ENCODE measurements at regions of chr16 and their contacts with region 1.

Region 1: GRCh38 chr16:67155295-67156142 is 4.2 kb downstream of the TRADD start:
- DNase-seq: peak; percentile 88
- ATAC-seq: peak; percentile 66

Region 2: GRCh38 chr16:66977341-66978113 is 178.0 kb before region 1 on chr16:
- intact Hi-C with region 1: loop called (anchors 2 kb)
- DNase-seq: peak; percentile 95
- ATAC-seq: peak; percentile 98

Region 3: DNA sequence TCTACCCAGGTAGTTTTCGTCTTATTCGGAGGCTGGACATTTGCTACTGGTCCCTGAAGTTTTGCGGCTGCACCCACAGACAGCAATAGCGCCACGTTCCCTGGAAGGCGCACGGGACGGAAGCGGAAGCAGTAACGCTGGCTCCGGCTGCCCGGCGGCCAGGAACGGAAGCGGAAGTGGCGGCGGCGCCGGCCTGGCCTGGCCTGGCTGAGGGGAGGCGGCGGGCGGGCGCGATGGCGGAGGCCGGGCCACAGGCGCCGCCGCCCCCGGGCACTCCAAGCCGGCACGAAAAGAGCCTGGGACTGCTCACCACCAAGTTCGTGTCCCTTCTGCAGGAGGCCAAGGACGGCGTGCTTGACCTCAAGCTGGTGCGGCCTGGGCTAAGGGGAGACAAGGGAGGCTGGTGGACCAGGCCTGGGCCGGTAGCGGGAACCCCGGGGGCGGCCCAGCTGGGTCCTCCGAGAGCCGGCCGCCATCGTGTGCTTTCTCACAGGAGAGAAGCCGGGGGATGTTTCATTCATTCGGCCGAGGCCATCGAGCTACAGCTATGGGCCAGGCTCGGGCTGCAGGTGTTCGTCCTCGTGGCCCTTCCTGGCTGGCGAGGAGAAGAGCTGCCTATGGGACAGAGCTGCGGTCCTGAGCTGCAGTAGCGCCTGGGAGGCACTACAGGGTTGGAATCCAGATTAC is 36.6 kb after region 1 on chr16 and contains the start of gene E2F4:
- intact Hi-C with region 1: loop called (anchors 2 kb)
- DNase-seq: peak; percentile 94
- ATAC-seq: peak; percentile 97
- total RNA-seq, gene E2F4: 34.8 TPM

Region 4: DNA sequence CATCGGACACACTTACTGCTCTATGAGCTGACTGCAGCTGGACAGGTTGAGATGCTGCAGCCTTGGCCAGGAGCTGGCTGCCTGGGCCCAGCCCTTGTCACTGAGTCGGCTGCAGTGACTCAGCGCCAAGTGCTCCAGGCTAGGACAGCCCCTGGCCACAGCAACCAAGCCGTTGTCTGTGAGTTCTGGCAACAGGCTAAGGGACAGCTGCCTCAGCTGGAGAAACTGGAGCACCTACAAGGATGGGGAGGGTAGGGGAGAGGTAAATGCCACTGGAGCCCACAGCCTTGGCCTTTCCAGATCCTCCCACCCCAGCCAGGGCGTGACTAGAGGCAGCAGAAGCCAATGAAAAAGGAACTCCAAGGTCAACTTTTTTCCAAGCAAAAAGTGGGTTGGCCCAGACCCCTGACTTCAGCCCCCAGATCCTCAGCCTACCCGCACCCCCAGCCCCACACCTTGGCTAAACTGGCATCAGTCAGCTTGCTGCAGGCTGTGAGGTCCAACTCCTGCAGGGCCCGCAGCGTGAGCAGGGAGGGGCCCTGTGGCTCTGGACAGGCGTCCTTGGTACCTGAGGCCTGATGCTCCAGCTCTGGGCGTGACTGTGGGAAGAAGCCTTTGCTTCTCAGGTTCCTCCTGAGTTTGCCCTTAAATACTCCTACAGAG is 52.5 kb after region 1 on chr16:
- intact Hi-C with region 1: no loop called
- DNase-seq: no peak
- ATAC-seq: no peak

Region 5: GRCh38 chr16:67226804-67227557 is 71.5 kb after region 1 on chr16 and contains the start of gene TMEM208:
- intact Hi-C with region 1: no loop called
- DNase-seq: peak; percentile 98
- ATAC-seq: peak; percentile 98
- total RNA-seq, gene TMEM208: 11.0 TPM